H1 (cell line): ENCODE measurements at regions of chr21 and their contacts with region 1.

Region 1: DNA sequence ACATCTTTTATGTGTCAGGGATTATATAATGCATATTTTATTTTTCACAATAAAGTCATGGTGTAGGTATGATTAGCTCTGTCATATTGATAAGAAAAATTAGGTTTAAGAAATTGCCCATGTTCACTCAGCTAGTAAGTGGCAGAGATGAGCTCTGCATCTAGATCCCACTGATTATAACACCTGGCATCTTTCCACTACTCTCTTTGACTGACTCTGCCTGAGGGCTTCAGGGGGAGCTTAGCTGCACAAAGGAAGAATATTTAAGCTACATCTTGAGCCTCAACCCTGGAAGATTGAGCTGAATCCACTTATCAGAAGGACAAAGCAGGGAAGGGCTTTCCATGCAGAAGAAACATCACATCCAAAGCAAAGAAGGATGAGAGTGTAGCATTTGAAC is 190.4 kb downstream of the MIS18A start:
- DNase-seq: no peak
- H3K4me3 ChIP-seq: no peak overlapping the region
- H3K27ac ChIP-seq: no peak overlapping the region
- H3K4me1 ChIP-seq: no peaks in the 10 kb centered on the region
- H3K27me3 ChIP-seq: no peaks in the 10 kb centered on the region; a peak in 1 of 7 replicates
- CTCF ChIP-seq: no peak
- EP300 ChIP-seq: no peak
- POLR2A ChIP-seq: no peak
- RAD21 ChIP-seq: no peak

Region 2: DNA sequence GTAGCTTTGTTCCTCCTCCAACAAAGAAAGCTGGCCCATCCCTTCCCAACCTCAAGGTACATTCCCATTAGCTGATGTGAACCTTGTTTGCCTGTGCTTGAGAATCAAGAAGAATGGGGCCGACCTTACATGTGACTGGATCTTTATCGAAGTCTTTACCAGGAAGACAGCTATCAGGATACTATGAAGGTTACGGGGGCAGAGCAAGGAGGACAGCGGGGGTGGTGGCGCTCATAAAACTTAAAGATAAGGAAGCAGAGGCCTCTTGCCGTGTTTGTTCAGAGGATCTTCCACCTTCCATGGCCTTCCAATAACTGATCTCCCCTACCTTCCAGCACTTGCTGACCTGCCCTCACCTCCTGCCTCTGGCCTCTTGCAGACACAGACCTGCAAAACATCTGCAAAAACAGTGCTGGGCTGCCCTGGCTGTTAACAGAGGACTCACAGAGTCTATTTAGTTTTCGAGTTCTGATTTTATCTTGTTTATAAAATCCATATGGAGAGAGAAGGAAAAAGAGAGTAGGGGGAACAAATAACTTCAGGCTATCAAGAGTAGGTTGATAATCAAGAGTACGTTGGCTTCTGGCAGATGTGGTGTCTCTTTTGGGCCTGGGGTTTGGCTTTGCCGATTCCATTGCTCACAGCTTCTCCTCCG is 17.7 kb before region 1 on chr21:
- CTCF ChIA-PET with region 1: interaction called, 12 read pairs
- POLR2A ChIA-PET with region 1: no interaction called
- DNase-seq: no peak
- H3K4me3 ChIP-seq: no peak overlapping the region
- H3K27ac ChIP-seq: no peak overlapping the region
- H3K4me1 ChIP-seq: no peaks in the 10 kb centered on the region; a peak in 1 of 7 replicates
- H3K27me3 ChIP-seq: no peaks in the 10 kb centered on the region
- CTCF ChIP-seq: no peak
- EP300 ChIP-seq: no peak
- POLR2A ChIP-seq: no peak
- RAD21 ChIP-seq: no peak

Region 3: DNA sequence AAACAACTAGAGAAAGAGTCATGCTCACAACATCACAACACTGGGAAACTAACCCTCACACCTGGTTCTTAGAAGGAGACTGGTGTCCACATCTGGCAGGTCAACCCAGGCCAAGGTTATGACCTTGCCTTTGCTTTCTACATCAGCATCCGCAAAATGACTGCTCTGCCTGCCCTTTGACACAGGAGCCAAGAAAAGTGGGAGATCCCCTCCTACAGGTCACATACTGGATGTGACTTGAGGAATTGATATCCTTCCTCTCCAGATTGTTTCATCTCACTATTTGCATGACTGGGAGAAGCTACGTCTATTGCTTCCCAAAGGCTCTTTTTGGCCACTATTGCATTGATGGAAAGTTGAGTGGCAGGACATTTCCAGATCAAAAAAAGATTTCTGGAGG is 74.9 kb after region 1 on chr21:
- CTCF ChIA-PET with region 1: no interaction called
- POLR2A ChIA-PET with region 1: no interaction called
- DNase-seq: no peak
- H3K4me3 ChIP-seq: no peak overlapping the region
- H3K27ac ChIP-seq: no peak overlapping the region
- H3K4me1 ChIP-seq: no peaks in the 10 kb centered on the region
- H3K27me3 ChIP-seq: no peaks in the 10 kb centered on the region
- CTCF ChIP-seq: peak in 2 of 3 experiments; percentile 26 to 41; a peak in 2 of 4 replicates
- EP300 ChIP-seq: no peak
- POLR2A ChIP-seq: no peak
- RAD21 ChIP-seq: peak; percentile 48 to 60